Esophagus squamous epithelium (tissue), 5 donors: ENCODE measurements at regions of chr9 and their contacts with region 1.

Region 1: DNA sequence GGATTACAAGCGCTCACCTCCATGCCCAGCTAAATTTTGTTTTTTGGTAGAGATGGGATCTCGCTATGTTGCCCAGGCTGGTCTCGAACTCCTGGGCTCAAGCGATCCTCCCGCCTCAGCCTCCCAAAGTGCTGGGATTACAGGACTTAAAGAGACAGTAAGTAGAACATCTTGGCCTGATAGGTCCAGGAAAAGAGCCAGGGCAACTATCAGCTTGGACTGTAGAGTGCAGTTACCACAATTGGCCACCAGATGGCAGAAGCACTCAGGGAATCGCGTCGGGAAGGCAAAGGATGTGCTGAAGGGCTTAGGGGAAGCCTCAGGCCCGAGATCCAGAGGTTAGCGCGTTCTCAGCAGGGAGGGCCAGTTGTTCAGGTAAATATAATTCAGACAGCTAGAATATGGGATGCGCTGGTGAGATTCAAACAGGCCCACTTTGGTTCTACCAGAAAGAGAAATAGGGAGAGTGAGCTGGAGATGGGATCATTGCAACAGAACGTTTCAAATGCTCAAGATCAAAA is 21.5 kb downstream of the C9orf57 start:
- DNase-seq: no peak
- H3K4me3 ChIP-seq: no peak overlapping the region
- H3K27ac ChIP-seq: no peak overlapping the region
- H3K4me1 ChIP-seq: peaks cover 0 to 16% (median 0%) of the 10 kb centered on the region in 3 donors
- H3K27me3 ChIP-seq: no peaks in the 10 kb centered on the region
- CTCF ChIP-seq: peak; percentile 91 to 99 (median 96)
- POLR2A ChIP-seq: no peak

Region 2: GRCh38 chr9:71878327-71879274 is 160.3 kb before region 1 on chr9:
- intact Hi-C with region 1: no loop called
- DNase-seq: no peak
- H3K4me3 ChIP-seq: no peak overlapping the region
- H3K27ac ChIP-seq: no peak overlapping the region
- H3K4me1 ChIP-seq: peaks cover 0 to 12% (median 0%) of the 10 kb centered on the region in 3 donors
- H3K27me3 ChIP-seq: no peaks in the 10 kb centered on the region
- CTCF ChIP-seq: no peak
- POLR2A ChIP-seq: no peak

Region 3: GRCh38 chr9:72271613-72272478 is 232.9 kb after region 1 on chr9:
- intact Hi-C with region 1: loop called (anchors 5 kb)
- DNase-seq: no peak
- H3K4me3 ChIP-seq: no peak overlapping the region
- H3K27ac ChIP-seq: no peak overlapping the region
- H3K4me1 ChIP-seq: peaks cover 3 to 10% (median 3%) of the 10 kb centered on the region in 3 donors
- H3K27me3 ChIP-seq: no peaks in the 10 kb centered on the region
- CTCF ChIP-seq: peak; percentile 78 to 84 (median 82)
- POLR2A ChIP-seq: no peak

Region 4: DNA sequence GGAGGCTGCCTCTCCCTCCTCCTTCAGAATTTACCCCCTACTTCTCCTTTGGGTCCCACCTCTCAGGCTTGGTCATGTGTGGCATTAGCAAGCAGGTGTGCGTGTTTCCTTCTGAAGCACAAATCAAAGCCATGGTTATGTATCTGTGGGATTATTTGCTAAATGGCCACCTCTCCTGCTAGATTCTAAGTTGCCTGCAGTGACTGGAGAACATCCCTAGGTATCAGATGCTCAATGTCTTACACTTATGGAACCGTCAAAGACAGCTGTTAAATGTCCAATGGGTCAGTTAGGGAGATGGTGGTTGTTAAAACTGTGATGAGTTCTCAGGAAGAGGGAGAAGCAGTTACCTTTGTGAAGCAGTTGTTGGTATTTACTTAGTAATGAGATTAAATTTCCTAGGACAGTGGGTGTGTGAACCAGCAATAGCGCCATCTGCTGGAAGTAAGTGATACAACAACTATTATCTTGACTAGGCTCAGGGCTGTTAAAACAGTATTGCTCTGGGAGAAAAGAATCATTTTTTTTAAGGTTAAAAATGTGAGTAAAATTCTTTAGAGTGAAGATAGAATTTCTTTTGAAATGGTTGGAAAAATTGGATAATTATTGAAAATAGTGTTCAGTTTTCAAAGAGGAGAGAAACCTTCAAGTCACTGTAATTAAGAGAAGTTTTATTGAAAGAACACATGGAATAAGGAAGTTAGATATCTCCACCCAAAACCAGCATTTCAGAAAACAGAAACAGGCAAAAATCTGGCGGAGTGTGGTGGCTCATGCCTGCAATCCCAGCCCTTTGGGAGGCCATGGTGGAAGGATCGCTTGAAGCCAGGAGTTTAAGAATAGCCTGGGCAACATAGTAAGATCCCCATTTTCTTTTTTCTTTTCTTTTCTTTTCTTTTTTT is 553.8 kb after region 1 on chr9:
- intact Hi-C with region 1: loop called (anchors 10 kb)
- DNase-seq: no peak
- H3K4me3 ChIP-seq: no peak overlapping the region
- H3K27ac ChIP-seq: peak overlapping the region in 1 of 4 donors; percentile 24
- H3K4me1 ChIP-seq: peaks cover 0 to 38% (median 13%) of the 10 kb centered on the region in 3 donors
- H3K27me3 ChIP-seq: no peaks in the 10 kb centered on the region
- CTCF ChIP-seq: peak; percentile 71 to 95 (median 88)
- POLR2A ChIP-seq: no peak

Region 5: GRCh38 chr9:72823971-72824370 is 785.0 kb after region 1 on chr9:
- intact Hi-C with region 1: loop called (anchors 5 kb)
- DNase-seq: no peak
- H3K4me3 ChIP-seq: no peak overlapping the region
- H3K27ac ChIP-seq: peak overlapping the region in 1 of 4 donors; percentile 15
- H3K4me1 ChIP-seq: peaks cover 4 to 60% (median 19%) of the 10 kb centered on the region in 3 donors
- H3K27me3 ChIP-seq: no peaks in the 10 kb centered on the region
- CTCF ChIP-seq: no peak
- POLR2A ChIP-seq: no peak